OCI-LY7 (cell line): ENCODE measurements at regions of chr9 and their contacts with region 1.

Region 1: DNA sequence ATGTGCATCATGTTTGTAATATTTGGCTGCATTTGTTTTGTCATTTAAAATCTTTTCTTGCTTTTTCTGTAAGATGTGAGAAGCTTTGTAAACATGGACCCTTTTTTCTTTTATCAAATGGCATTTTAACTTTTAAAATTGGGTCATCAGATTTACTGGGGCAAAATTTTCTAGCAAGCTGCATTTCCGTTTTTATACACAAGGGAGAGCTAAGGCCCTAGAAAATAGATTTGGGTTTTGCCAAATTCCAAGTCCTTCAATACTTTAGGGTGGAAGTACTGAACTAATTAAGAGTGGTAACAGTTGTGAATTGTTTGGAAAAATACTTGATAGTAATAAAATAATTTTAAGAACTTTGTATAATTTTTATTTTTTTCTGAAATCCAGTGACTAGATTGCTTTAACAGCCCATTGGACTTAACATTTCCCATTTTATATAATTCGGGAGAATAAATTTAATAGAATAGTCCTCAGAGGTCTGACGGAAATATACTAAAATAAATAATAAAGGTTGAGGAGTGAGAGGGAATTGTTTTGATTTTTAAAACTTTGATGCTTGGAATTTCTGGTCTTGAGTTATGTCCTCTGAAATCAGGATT is 117.4 kb downstream of the SMARCA2 start:
- DNase-seq: peak; percentile 36
- H3K4me3 ChIP-seq: no peak overlapping the region
- H3K27ac ChIP-seq: no peak overlapping the region
- H3K4me1 ChIP-seq: no peaks in the 10 kb centered on the region
- CTCF ChIP-seq: peak; percentile 89

Region 2: GRCh38 chr9:2120926-2121689 is 11.5 kb before region 1 on chr9:
- CTCF ChIA-PET with region 1: no interaction called
- POLR2A ChIA-PET with region 1: interaction called, 19 read pairs
- intact Hi-C with region 1: no loop called
- DNase-seq: no peak
- H3K4me3 ChIP-seq: no peak overlapping the region
- H3K27ac ChIP-seq: no peak overlapping the region
- H3K4me1 ChIP-seq: peaks cover 6% of the 10 kb centered on the region
- CTCF ChIP-seq: 0 out of 2 replicates have a peak, but pooled peaks have one; percentile 20

Region 3: DNA sequence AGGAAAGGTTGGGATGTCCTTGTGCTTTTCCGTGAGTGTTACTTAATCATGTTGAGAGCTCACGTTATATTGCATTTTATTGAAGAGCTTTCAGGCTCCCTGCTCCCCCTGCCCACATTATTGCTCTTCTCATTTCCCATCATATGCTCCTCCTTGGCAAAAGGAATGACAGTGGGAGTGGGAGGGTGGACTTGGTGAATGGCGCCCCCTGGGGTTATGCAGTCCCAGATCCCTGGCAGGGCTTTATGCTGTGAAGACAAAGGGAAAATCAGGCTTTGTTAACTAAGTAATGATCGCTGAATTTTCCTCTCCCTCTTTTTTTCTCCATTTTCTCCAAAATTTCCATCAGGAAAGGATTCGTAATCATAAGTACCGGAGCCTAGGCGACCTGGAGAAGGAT is 49.2 kb after region 1 on chr9:
- CTCF ChIA-PET with region 1: no interaction called
- POLR2A ChIA-PET with region 1: interaction called, 5 read pairs
- intact Hi-C with region 1: loop called (anchors 1 kb)
- DNase-seq: peak; percentile 24
- H3K4me3 ChIP-seq: no peak overlapping the region
- H3K27ac ChIP-seq: no peak overlapping the region
- H3K4me1 ChIP-seq: no peaks in the 10 kb centered on the region
- CTCF ChIP-seq: peak; percentile 85

Region 4: GRCh38 chr9:2727966-2728613 is 595.5 kb after region 1 on chr9:
- CTCF ChIA-PET with region 1: interaction called, 10 read pairs
- POLR2A ChIA-PET with region 1: no interaction called
- intact Hi-C with region 1: no loop called
- DNase-seq: peak; percentile 52
- H3K4me3 ChIP-seq: no peak overlapping the region
- H3K27ac ChIP-seq: no peak overlapping the region
- H3K4me1 ChIP-seq: peaks cover 7% of the 10 kb centered on the region
- CTCF ChIP-seq: peak; percentile 75